Aorta (tissue), 5 donors: ENCODE measurements at regions of chr3 and their contacts with region 1.

Region 1: DNA sequence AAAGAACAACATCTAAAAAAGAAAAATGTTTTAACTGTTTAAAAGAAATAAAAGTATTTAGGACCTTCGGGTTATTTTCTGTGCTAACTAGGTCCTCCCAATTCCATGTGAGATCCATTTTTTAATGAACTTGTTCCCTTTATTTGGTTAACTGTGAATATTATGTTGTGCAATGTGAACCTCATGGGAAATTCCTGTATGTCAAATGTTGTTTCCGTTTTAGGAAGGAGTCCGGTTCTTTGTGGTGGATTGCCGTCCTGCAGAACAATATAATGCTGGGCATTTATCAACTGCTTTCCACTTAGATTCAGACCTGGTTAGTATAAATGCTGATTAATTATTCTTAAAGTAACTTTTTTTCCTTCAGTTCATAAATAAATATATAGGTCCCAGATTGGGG is 35.5 kb upstream of the NIT2 start:
- DNase-seq: no peak
- ATAC-seq: no peak
- H3K4me3 ChIP-seq: no peak overlapping the region
- H3K27ac ChIP-seq: no peak overlapping the region
- H3K4me1 ChIP-seq: no peaks in the 10 kb centered on the region
- H3K27me3 ChIP-seq: no peaks in the 10 kb centered on the region

Region 2: GRCh38 chr3:100325827-100326226 is 26.8 kb after region 1 on chr3:
- intact Hi-C with region 1: loop called in 1 of 2 experiments (anchors 1 kb)
- DNase-seq: no peak
- ATAC-seq: no peak
- H3K4me3 ChIP-seq: no peak overlapping the region
- H3K27ac ChIP-seq: no peak overlapping the region
- H3K4me1 ChIP-seq: no peaks in the 10 kb centered on the region
- H3K27me3 ChIP-seq: no peaks in the 10 kb centered on the region